OCI-LY7 (cell line): ENCODE measurements at regions of chr5 and their contacts with region 1.

Region 1: GRCh38 chr5:43484106-43484849 is 613 bp upstream of the TMEM267 start:
- DNase-seq: peak; percentile 92
- H3K4me3 ChIP-seq: peak overlapping the region; percentile 84
- H3K27ac ChIP-seq: peak overlapping the region; percentile 88
- H3K4me1 ChIP-seq: peaks cover 27% of the 10 kb centered on the region
- CTCF ChIP-seq: peak; percentile 86

Region 2: DNA sequence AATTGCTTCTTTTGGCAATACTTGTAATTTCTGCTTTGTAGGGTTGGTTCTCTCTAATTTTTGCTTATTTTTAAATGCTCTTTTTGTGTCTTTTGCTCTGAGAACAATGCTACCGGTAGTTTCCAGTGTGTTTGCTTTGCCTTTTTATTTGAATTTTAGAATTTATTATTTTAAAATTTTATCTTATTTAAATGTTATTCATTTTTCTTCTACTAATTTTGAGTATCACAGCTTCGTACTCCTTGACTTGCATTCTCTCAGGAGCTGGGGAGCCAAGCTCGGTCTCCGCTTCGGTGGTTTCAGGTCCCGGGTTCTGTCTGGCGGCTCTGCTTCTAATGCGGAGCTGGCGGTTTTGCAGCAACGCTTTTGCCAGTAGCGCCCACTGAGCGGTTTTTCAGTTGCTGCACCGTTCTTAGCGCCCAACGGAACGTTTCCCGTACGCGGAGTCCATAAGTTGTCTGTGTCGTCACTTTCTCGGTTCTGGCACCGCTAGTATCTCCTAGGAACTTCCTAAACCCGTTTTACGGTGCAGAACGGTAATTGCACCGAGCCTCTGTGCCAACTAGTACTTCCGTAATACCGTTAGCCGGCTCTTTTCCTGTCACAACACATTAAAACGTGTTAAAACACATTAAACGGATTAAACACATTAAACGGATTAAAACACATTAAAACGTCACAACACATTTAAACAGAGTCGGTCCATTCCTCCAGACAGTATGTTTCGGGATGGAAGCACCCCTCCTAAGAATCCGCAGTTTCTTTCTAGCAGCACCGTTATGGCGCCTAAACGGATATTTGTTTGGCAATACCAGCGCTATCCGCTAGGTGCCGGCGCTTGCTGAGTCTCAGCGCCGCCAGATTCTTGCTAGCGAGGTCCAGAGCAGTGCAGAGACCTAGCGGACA is 489.8 kb before region 1 on chr5:
- CTCF ChIA-PET with region 1: no interaction called
- POLR2A ChIA-PET with region 1: no interaction called
- intact Hi-C with region 1: loop called (anchors 10 kb)
- DNase-seq: peak; percentile 92
- H3K4me3 ChIP-seq: peak overlapping the region; percentile 79
- H3K27ac ChIP-seq: peak overlapping the region; percentile 63
- H3K4me1 ChIP-seq: peaks cover 30% of the 10 kb centered on the region
- CTCF ChIP-seq: peak; percentile 86

Region 3: DNA sequence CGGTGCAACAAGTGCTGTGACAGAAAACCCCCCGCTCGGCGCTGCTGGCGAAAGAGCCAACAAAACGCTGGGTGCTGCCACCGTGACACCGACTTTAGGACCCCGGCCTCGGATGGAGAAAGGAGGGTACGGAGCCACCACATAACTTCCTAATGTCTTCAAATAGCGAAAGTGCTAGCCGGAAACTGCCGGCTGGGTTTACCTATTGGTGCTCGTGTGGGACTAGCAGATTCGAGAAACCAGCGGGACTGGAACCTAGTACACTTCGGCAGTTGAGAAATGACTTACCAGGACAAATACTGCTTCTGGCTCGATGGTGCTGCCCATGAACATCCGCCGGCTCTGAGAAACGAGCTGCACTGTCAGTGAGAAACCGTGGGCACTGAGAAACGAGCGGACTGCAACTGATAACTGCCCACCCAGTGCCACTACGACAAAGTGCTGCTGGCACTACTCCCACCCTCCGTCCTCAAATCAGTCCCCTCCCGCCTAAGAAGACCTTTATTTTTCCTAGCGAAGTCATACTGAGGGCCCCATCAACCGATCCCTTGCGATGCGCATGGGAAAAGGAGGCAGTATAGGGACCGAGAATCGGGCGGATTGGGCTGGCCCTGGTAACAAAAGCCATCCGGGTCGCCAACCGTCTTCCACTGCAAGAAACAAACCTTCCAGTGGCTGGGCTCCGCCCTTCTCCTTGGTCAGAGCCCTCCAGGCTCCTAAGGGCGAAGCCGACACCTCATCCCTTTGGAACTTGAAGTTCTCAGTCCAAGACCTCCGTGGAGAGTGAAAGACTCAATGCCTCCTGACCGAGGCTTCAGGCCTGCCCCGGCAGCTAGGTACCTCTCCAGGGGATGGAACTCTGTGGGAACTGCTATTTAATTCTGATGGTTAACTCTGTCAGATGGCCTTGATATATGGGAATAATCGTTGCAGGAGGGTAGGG is 417.2 kb before region 1 on chr5:
- CTCF ChIA-PET with region 1: no interaction called
- POLR2A ChIA-PET with region 1: interaction called, 3 read pairs
- intact Hi-C with region 1: loop called (anchors 2 kb)
- DNase-seq: peak; percentile 93
- H3K4me3 ChIP-seq: peak overlapping the region; percentile 85
- H3K27ac ChIP-seq: peak overlapping the region; percentile 92
- H3K4me1 ChIP-seq: peaks cover 29% of the 10 kb centered on the region
- CTCF ChIP-seq: no peak

Region 4: GRCh38 chr5:43227655-43228054 is 256.6 kb before region 1 on chr5:
- CTCF ChIA-PET with region 1: no interaction called
- POLR2A ChIA-PET with region 1: no interaction called
- intact Hi-C with region 1: no loop called
- DNase-seq: peak; percentile 20
- H3K4me3 ChIP-seq: no peak overlapping the region
- H3K27ac ChIP-seq: no peak overlapping the region
- H3K4me1 ChIP-seq: no peaks in the 10 kb centered on the region
- CTCF ChIP-seq: peak; percentile 74

Region 5: GRCh38 chr5:43313035-43313853 is 171.0 kb before region 1 on chr5 and contains the start of gene HMGCS1:
- CTCF ChIA-PET with region 1: interaction called, 3 read pairs
- POLR2A ChIA-PET with region 1: interaction called, 27 read pairs
- intact Hi-C with region 1: loop called (anchors 2 kb)
- DNase-seq: peak; percentile 99
- H3K4me3 ChIP-seq: peak within 1 kb of the TSS; percentile 94
- H3K27ac ChIP-seq: peak within 1 kb of the TSS; percentile 80
- H3K4me1 ChIP-seq: peaks cover 46% of the 10 kb centered on the region
- CTCF ChIP-seq: no peak; the same call in 1 of the 2 replicates
- total RNA-seq, gene HMGCS1: 59.5 and 66.9 TPM in 2 replicates

Region 6: GRCh38 chr5:43470407-43470806 is 13.9 kb before region 1 on chr5:
- CTCF ChIA-PET with region 1: interaction called, 13 read pairs
- POLR2A ChIA-PET with region 1: interaction called, 10 read pairs
- intact Hi-C with region 1: no loop called
- DNase-seq: no peak
- H3K4me3 ChIP-seq: no peak overlapping the region
- H3K27ac ChIP-seq: no peak overlapping the region
- H3K4me1 ChIP-seq: no peaks in the 10 kb centered on the region
- CTCF ChIP-seq: no peak

Region 7: DNA sequence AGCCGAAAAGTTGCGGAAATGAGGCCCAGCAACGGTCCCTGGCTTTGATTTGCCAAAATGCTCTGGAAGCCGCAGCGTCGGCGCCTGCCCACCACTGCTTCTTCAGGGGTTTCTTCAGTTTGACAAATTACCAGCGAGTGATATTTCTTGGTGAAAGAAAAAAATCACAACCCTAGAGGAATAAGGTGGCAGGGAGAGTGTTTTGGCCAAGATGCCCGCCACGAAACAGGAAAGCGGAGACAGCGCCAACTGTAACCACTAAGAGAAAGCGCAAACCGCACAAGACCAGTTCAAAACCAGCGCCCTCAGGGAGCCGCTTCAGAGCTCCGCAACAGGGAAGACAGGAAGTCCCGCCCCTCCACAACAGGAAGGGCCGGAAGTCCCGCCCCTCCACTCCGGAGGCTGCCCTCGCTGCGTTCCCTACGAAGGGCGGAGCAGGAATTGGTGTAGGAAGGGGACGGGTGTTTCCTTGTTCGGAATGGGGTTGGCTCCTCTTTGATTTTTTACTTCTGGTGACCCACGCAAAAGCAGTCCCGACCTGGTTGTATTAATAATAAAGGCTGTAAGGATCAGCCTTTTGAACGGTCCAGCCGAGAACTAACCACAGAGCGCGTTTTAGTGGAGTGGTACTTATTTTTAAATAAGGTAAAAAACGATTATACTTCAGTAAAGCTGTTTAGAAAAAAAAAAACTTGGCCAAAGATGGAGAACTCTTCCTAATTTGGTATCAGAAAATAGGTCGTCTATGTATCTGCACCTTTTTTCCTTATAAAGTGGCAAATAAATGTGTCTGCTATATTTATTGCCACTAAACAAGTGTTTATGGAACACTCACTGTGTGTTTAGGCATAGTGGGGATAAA is 30.8 kb after region 1 on chr5 and contains the start of gene C5orf34:
- CTCF ChIA-PET with region 1: interaction called, 3 read pairs
- POLR2A ChIA-PET with region 1: interaction called, 38 read pairs
- intact Hi-C with region 1: loop called (anchors 2 kb)
- DNase-seq: peak; percentile 97
- H3K4me3 ChIP-seq: peak within 1 kb of the TSS; percentile 74
- H3K27ac ChIP-seq: peak within 1 kb of the TSS; percentile 86
- H3K4me1 ChIP-seq: peaks cover 17% of the 10 kb centered on the region
- CTCF ChIP-seq: peak; percentile 52
- total RNA-seq, gene C5orf34: 25.5 and 33.9 TPM in 2 replicates

Region 8: DNA sequence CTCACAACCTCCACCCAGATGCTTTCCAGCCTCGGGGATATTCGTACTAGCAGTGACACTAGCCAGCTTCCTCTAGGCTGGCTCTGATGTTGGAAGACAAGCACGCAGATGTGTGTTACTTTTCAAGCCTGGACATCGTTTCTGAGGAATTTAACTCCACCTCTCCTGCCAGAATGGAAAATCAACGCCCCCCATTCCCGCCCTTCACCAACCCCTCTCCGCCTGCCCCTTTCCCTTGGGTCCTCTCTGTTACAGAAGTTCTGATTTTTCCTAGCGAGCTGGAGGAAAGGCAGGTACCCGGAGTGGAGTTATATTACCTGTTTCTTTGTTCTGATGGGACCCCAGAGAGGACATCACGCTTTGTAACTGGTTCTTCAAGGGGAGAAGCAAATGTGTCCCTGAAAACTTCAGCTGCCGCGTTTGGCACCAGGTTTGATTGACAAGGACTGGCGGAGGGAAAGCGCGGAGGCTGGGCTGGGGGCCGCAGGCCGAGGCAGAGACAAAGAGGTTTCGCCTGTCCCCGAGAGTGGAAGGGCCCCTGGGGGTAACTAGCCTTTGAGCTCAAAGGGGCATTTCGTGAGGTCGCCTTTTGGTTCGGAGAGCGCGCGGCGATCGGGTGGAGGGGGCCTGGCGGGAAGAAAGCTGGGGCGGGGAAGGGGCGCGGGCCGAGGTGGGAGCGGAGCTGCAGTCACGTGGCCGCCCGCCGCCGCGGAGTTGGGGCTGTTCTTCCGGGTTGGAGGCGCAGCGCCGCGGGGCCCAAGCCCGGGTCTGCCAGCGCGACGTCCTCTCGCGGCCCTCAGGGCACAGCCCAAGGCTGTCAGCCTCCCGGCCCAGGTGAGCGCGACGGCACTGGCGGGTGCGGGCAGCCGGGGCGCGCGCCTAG is 118.4 kb after region 1 on chr5 and contains the start of gene NNT:
- CTCF ChIA-PET with region 1: no interaction called
- POLR2A ChIA-PET with region 1: interaction called, 15 read pairs
- intact Hi-C with region 1: loop called (anchors 2 kb)
- DNase-seq: peak; percentile 84
- H3K4me3 ChIP-seq: peak within 1 kb of the TSS; percentile 86
- H3K27ac ChIP-seq: peak within 1 kb of the TSS; percentile 60
- H3K4me1 ChIP-seq: peaks cover 24% of the 10 kb centered on the region
- CTCF ChIP-seq: no peak
- total RNA-seq, gene NNT: 33.6 and 42.2 TPM in 2 replicates